Body of pancreas (tissue), 4 donors: ENCODE measurements at regions of chr11 and their contacts with region 1.

Region 1: GRCh38 chr11:73242251-73243079 is 24.4 kb downstream of the P2RY2 start:
- DNase-seq: peak; percentile 74 to 80 (median 78)
- ATAC-seq: peak; percentile 89
- H3K4me3 ChIP-seq: no peak overlapping the region
- H3K27ac ChIP-seq: no peak overlapping the region
- H3K4me1 ChIP-seq: peaks cover 9% of the 10 kb centered on the region
- H3K27me3 ChIP-seq: no peaks in the 10 kb centered on the region
- CTCF ChIP-seq: peak; percentile 87 to 94 (median 90)
- POLR2A ChIP-seq: peak in 1 of 3 donors; percentile 26

Region 2: GRCh38 chr11:73184953-73185671 is 57.4 kb before region 1 on chr11:
- intact Hi-C with region 1: loop called (anchors 5 kb)
- DNase-seq: peak; percentile 69 to 73 (median 72)
- ATAC-seq: peak; percentile 79
- H3K4me3 ChIP-seq: no peak overlapping the region
- H3K27ac ChIP-seq: peak overlapping the region in 2 of 4 donors; percentile 56 to 58
- H3K4me1 ChIP-seq: peaks cover 11% of the 10 kb centered on the region
- H3K27me3 ChIP-seq: no peaks in the 10 kb centered on the region
- CTCF ChIP-seq: peak; percentile 55 to 92 (median 83)
- POLR2A ChIP-seq: no peak